Posterior cingulate gyrus (tissue), 11 donors: ENCODE measurements at regions of chr1 and their contacts with region 1.

Region 1: GRCh38 chr1:108897865-108898720 is 21.3 kb downstream of the GPSM2 start:
- DNase-seq: peak in 1 of 10 donors; percentile 42

Region 2: DNA sequence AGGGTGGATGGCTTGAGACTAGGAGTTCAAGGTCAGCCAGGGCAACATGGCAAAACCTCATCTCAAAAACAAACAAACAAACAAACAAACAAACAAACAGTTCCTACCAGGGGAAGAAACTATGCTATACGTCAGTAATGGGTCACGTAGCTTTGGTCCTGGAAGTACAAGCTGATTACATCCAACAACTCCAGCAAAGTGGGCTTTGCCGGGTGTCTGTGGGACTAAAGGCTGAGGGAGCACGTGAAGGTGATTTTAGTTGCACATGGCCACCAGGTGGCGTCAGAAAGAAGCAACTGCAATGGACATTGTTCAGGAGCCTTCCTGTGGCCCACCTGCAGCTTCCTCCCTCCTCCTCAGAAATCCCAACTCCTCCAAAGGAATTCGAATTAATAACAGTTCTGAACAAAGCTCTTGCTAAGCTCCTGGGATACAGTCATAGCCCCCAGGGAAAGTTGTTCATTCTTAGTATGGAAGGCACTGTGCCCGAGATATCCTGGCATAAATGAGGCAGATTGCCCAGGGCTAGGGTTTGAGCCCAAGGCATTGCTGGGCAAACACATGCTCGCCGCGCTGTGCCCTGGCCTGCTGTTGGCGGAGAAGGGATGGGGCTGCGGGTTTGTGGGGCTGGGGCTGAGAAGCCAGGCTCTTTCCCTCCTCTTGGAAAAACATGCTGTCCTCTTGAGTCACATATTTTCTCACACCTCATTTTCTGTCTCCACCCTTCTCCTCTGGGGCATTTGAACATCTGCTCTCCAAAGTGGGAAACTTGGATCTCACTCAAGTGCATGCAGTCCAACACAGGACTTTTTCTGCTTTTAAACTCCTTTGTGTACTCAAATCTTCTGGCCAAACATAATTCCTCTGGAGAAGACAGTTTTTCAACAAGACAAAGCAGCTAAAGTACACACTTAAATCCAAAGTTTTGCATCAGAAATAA is 69.8 kb before region 1 on chr1:
- intact Hi-C with region 1: loop called (anchors 1 kb)
- DNase-seq: peak; percentile 52 to 95 (median 82)

Region 3: GRCh38 chr1:108963052-108963686 is 65.1 kb after region 1 on chr1 and contains the start of gene CLCC1:
- intact Hi-C with region 1: no loop called
- DNase-seq: peak; percentile 87 to 99 (median 93)